ENCODE measurements at regions of chr7 and their contacts with region 1.

Region 1: GRCh38 chr7:149027611-149028345 is 527 bp downstream of the PDIA4 start:
- DNase-seq: peak; percentile 15

Region 2: DNA sequence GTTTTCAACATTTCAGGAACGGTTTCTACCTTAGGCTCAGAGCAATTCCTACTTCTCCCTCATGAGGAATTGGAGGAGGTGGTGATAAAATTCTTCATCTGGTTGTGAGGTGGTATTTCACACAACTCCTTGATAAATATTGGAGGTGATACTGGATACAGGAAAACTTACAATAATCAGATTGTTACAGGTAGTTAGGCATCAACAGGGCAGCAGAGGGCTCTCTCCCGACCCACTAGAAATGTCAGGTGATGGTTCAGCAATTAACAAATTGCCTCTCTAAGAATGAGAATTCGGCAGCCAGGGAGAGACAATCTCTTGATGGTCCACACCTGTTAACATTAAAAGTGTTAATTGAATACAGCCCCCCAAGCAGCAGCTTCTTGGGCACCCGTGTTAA is 40.1 kb after region 1 on chr7:
- intact Hi-C with region 1: loop called in 1 of 2 experiments (anchors 2 kb)
- DNase-seq: no peak

Region 3: DNA sequence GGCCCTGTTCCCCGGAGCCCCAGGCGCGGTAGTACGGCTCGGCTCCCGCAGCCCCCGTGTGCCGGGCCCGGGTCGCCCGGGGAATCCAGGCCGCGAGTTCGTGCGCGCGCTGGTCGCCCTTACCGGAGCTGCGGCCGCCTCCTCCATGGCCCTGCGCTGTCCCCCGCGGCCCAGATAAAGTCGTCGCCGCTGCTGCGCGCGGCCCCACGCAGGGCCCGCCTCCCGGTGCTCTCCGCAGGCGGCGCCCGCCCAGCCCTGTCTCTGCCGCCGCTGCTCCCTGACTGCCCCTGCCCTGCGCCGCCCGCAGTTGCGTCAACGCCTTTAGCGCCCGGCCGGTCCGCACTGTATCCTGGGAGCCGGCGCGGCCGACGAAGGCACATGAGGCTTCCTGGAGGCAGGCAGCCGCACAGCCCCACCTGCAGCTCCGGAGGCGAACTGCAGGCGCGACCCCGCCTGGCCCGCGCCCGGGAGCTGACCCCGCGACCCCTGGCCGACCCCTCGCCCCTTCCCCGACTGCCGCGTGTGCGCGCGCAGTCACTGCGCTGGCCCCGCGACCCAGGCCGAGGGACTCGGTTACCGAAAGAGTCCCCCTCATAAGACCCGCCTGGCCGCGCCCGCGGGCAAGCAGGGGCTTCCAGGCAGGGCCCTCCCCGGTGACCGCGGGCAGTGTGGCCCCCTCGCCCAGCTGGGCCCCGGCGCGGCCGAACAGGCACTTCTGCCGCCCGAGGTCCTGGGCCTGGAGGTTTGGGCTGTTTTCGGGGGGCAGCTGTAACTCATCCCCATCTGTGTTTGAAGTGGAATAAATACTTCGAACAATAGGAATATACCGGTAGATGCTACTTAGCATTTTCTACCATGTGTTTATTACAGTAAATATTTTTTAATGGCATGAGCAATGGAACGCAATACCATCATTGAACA is 596.9 kb after region 1 on chr7:
- intact Hi-C with region 1: no loop called
- DNase-seq: peak; percentile 99